Dendritic cell treated with granulocyte-macrophage colony-stimulating factor and Interleukin-4, amounts not matched to agents 40 ng/mL and 50 ng/mL, for 4 days (primary cell): ENCODE measurements at regions of chr2 and their contacts with region 1.

Region 1: GRCh38 chr2:43131024-43131889 is 95.1 kb downstream of the ZFP36L2 start:
- H3K4me3 Mint-ChIP-seq: peak overlapping the region; percentile 17
- H3K27ac Mint-ChIP-seq: peak overlapping the region; percentile 84
- H3K4me1 Mint-ChIP-seq: peaks cover 91% of the 10 kb centered on the region
- H3K27me3 Mint-ChIP-seq: no peaks in the 10 kb centered on the region

Region 2: GRCh38 chr2:42859006-42859552 is 272.2 kb before region 1 on chr2:
- intact Hi-C with region 1: loop called (anchors 10 kb)
- H3K4me3 Mint-ChIP-seq: no peak overlapping the region
- H3K27ac Mint-ChIP-seq: no peak overlapping the region
- H3K4me1 Mint-ChIP-seq: peaks cover 27% of the 10 kb centered on the region
- H3K27me3 Mint-ChIP-seq: peaks cover 3% of the 10 kb centered on the region

Region 3: DNA sequence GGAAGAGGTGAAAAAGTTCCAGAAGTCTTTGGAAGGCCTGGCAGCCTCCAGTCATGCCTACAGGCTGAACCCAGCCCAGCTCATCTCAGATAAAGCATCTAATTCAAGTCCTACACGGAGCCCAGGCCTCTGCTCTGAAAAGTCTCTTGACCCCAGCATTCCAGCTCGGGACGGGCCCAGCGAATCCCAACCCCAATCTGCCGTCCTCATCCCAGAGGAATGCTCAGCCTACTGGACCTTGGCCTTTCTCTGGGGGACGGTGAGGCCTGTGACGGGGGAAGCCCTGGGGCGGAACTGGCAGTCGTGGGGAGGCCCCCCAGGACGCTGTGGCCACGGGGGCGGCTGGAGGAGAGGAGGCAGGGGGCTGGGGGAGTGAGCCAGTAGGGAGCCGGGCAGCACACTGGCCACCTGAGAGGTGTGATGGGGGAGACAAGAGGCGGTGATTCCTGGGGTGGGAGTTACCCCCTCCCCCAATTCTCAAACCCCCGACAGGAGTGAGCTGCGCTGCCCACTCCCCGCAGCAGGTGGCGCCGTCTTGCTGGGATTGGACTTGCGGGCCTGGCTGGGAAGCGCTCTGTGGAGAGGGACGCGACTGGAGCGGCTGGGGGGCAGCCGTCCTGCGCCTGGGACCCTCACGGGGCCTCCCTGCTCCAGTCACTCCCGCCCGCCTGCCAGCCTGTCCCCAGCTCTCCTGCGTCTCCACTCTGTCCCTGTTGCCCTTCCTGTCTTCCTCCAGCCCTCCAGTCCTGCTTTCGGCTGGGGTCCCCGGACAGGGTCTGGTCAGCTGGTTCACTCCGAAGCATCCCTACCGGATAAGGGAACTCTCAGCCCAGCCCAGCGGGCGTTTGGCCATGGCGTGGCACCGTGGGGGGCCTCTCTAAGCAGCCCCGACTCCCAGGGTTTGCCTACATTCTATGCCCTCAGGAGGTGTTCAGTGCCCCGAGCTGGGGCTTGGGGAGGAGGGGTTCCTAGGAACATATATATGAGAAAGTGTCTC is 156.2 kb before region 1 on chr2:
- intact Hi-C with region 1: loop called (anchors 2 kb)
- H3K4me3 Mint-ChIP-seq: peak overlapping the region; percentile 71
- H3K27ac Mint-ChIP-seq: peak overlapping the region; percentile 74
- H3K4me1 Mint-ChIP-seq: peaks cover 67% of the 10 kb centered on the region
- H3K27me3 Mint-ChIP-seq: peaks cover 7% of the 10 kb centered on the region

Region 4: DNA sequence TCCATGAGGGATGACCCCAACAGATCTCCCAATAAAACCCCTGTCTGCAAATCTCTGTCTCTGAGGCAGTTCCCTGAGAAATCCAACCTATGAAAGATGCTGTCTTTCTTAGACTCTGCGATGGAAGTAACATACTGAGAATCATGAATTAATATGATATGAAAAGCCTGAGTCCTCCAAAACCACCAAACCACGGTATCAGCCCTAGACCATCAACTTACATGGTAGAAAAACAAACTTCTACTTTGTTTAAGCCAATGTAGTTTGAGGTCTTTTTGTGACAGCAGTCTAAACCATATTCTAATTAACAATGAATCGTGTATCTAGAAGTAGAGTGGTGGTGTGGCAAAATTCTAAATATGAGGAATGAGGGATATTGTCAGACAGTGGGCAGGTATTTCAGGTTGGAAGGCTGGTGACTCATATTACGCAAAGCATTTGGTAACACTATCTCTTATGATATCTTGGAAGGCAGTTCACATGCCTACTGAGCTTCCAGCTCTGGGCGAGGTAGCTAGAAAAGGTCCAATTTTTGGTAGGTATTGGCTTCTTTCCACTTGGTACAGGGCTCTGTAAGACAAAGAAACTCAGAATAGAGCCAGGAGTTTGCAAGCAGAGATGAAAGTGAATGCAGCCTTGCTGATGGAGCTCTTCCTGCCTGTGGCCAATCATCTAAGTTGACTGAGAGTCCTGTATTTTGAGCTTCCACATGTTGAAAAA is 120.7 kb before region 1 on chr2:
- intact Hi-C with region 1: no loop called
- H3K4me3 Mint-ChIP-seq: no peak overlapping the region
- H3K27ac Mint-ChIP-seq: no peak overlapping the region
- H3K4me1 Mint-ChIP-seq: peaks cover 27% of the 10 kb centered on the region
- H3K27me3 Mint-ChIP-seq: peaks cover 10% of the 10 kb centered on the region

Region 5: GRCh38 chr2:43024515-43025011 is 106.7 kb before region 1 on chr2:
- intact Hi-C with region 1: loop called (anchors 10 kb)
- H3K4me3 Mint-ChIP-seq: no peak overlapping the region
- H3K27ac Mint-ChIP-seq: no peak overlapping the region
- H3K4me1 Mint-ChIP-seq: peaks cover 72% of the 10 kb centered on the region
- H3K27me3 Mint-ChIP-seq: no peaks in the 10 kb centered on the region

Region 6: GRCh38 chr2:43105586-43106558 is 25.4 kb before region 1 on chr2:
- intact Hi-C with region 1: loop called (anchors 2 kb)
- H3K4me3 Mint-ChIP-seq: peak overlapping the region; percentile 63
- H3K27ac Mint-ChIP-seq: peak overlapping the region; percentile 92
- H3K4me1 Mint-ChIP-seq: peaks cover 85% of the 10 kb centered on the region
- H3K27me3 Mint-ChIP-seq: no peaks in the 10 kb centered on the region

Region 7: DNA sequence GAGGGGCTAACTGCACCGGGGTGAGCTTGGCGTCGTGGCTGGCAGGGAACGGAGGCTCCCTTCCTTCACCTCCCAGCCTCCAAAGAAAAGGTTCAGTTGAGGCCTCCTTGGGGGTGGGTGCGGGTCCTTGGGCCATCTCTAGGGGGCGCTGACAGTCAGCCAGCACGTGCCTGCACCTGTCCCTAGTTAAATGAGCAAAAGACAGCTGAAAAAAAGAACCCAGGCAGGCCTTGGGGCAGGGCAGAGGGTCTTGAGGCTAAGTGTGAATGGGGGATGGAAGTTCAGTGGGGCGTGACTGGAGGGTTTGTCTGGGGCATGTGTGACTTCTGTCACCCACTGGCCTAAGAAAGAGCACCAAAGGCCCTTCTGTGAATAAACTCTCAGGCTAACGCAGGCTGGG is 38.7 kb after region 1 on chr2:
- intact Hi-C with region 1: loop called (anchors 5 kb)
- H3K4me3 Mint-ChIP-seq: no peak overlapping the region
- H3K27ac Mint-ChIP-seq: peak overlapping the region; percentile 88
- H3K4me1 Mint-ChIP-seq: peaks cover 83% of the 10 kb centered on the region
- H3K27me3 Mint-ChIP-seq: peaks cover 4% of the 10 kb centered on the region